A549 (cell line): ENCODE measurements at regions of chr17 and their contacts with region 1.

Region 1: DNA sequence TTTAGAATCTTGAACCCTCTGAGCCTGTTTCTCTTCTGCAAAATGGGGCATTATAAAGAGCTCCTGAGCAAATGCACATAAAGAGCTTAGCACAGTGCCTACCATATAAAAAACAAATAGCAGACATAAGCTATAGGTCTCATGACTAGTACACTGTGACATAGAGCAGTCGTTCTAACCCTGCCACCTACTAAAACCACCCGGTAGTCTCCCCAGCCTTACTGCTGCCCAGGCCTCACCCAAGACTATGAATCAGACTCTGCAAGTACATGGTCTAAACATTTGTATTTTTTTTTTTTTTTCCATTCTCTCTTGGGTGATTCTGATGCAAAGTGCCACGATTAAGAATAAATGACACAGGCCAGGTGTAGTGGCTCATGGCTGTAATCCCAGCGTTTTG is 33.9 kb downstream of the STX8 start:
- DNase-seq: no peak
- ATAC-seq: no peak
- H3K4me3 ChIP-seq: no peak overlapping the region
- H3K27ac ChIP-seq: no peak overlapping the region
- H3K4me1 ChIP-seq: no peaks in the 10 kb centered on the region
- CTCF ChIP-seq: no peak
- EP300 ChIP-seq: no peak
- POLR2A ChIP-seq: no peak
- RAD21 ChIP-seq: no peak

Region 2: GRCh38 chr17:9465210-9465921 is 76.4 kb before region 1 on chr17:
- CTCF ChIA-PET with region 1: no interaction called
- POLR2A ChIA-PET with region 1: no interaction called
- DNase-seq: no peak
- ATAC-seq: no peak
- H3K4me3 ChIP-seq: no peak overlapping the region
- H3K27ac ChIP-seq: no peak overlapping the region
- H3K4me1 ChIP-seq: no peaks in the 10 kb centered on the region
- CTCF ChIP-seq: no peak
- EP300 ChIP-seq: no peak
- POLR2A ChIP-seq: no peak
- RAD21 ChIP-seq: no peak

Region 3: DNA sequence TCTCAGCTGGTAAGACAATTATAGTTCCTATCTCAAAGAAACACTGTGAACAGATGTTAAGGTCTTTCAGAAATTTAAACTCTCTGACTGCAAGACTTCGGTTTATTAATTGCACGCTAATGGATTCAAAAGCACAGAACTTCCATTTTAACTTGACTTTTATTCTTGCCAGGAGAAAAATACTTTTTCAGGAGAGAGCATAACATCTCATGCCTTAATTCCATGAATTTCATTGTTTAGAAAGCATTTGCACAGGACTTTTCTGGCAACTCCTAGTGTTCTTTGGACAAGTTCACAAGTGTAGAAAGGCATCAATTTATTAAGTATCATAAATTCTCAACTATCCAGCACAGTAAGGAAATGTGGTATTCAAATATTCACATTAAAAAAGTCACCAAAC is 11.5 kb after region 1 on chr17:
- CTCF ChIA-PET with region 1: interaction called, 18 read pairs
- POLR2A ChIA-PET with region 1: no interaction called
- DNase-seq: no peak
- ATAC-seq: no peak
- H3K4me3 ChIP-seq: no peak overlapping the region
- H3K27ac ChIP-seq: no peak overlapping the region
- H3K4me1 ChIP-seq: no peaks in the 10 kb centered on the region
- CTCF ChIP-seq: no peak
- EP300 ChIP-seq: no peak
- POLR2A ChIP-seq: no peak
- RAD21 ChIP-seq: no peak

Region 4: DNA sequence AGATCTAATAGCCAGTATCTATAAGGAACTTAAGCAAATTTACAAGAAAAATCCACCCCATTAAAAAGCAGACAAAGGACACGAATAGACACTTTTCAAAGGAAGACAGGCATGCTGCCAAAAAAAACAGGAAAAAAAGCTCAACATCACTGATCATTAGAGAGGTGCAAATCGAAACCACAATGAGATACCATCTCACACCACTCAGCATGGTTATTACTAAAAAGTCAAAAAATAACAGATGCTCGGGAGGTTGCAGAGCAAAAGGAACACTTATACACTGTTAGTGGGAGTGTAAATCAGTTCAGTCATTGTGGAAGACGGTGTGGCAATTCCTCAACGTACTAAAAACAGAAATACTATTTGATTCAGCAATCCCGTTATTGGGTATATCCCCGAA is 24.3 kb after region 1 on chr17:
- CTCF ChIA-PET with region 1: no interaction called
- POLR2A ChIA-PET with region 1: no interaction called
- DNase-seq: no peak
- ATAC-seq: no peak
- H3K4me3 ChIP-seq: no peak overlapping the region
- H3K27ac ChIP-seq: no peak overlapping the region
- H3K4me1 ChIP-seq: no peaks in the 10 kb centered on the region
- CTCF ChIP-seq: no peak
- EP300 ChIP-seq: no peak
- POLR2A ChIP-seq: no peak
- RAD21 ChIP-seq: no peak